PC-9 (cell line): ENCODE measurements at regions of chr19 and their contacts with region 1.

Region 1: GRCh38 chr19:10000171-10000826 is 10.0 kb downstream of the COL5A3 start:
- DNase-seq: peak; percentile 60 to 64
- H3K4me3 ChIP-seq: no peak overlapping the region
- H3K27ac ChIP-seq: no peak overlapping the region
- H3K4me1 ChIP-seq: no peaks in the 10 kb centered on the region
- H3K27me3 ChIP-seq: peaks cover 77% of the 10 kb centered on the region
- CTCF ChIP-seq: peak; percentile 92

Region 2: GRCh38 chr19:9858766-9859165 is 141.5 kb before region 1 on chr19:
- CTCF ChIA-PET with region 1: interaction called, 12 read pairs
- POLR2A ChIA-PET with region 1: no interaction called
- intact Hi-C with region 1: no loop called
- DNase-seq: no peak
- H3K4me3 ChIP-seq: no peak overlapping the region
- H3K27ac ChIP-seq: no peak overlapping the region
- H3K4me1 ChIP-seq: no peaks in the 10 kb centered on the region
- H3K27me3 ChIP-seq: peaks cover 12% of the 10 kb centered on the region; the same call in 1 of the 2 replicates
- CTCF ChIP-seq: no peak

Region 3: GRCh38 chr19:9945319-9945966 is 54.9 kb before region 1 on chr19:
- CTCF ChIA-PET with region 1: no interaction called
- POLR2A ChIA-PET with region 1: no interaction called
- intact Hi-C with region 1: no loop called
- DNase-seq: no peak
- H3K4me3 ChIP-seq: no peak overlapping the region
- H3K27ac ChIP-seq: no peak overlapping the region
- H3K4me1 ChIP-seq: no peaks in the 10 kb centered on the region
- H3K27me3 ChIP-seq: peaks cover 29% of the 10 kb centered on the region; the same call in 1 of the 2 replicates
- CTCF ChIP-seq: no peak

Region 4: DNA sequence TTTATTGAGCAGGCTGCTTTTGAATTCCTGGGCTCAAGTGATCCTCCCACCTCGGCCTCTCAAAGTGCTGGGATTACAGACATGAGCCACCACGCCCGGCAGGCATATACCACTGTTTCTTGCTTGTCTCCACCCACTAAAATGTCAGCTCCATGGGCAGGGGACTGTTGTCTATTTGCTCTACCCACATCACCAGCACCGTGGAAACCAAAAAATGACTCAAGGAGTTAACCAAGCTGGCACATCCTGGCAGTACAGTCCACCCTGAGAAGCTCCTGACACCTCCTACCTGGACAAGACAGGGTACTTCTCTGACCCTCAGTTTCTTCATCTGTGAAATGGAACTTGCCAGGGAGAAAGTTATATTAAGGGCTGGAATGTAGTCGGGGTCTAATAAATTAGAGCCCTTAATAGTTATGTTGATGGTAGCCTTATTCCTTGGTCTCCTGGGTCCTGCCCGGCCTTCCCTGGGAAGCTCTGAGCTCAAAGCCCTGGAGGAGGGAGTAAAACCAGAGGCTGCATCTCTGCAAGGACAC is 26.9 kb after region 1 on chr19:
- CTCF ChIA-PET with region 1: interaction called, 10 read pairs
- POLR2A ChIA-PET with region 1: no interaction called
- intact Hi-C with region 1: no loop called
- DNase-seq: peak in 1 of 2 experiments; percentile 43
- H3K4me3 ChIP-seq: no peak overlapping the region
- H3K27ac ChIP-seq: no peak overlapping the region
- H3K4me1 ChIP-seq: peaks cover 3% of the 10 kb centered on the region; the same call in 1 of the 2 replicates
- H3K27me3 ChIP-seq: peaks cover 88% of the 10 kb centered on the region
- CTCF ChIP-seq: no peak

Region 5: GRCh38 chr19:10194500-10195289 is 194.4 kb after region 1 on chr19 and contains the start of gene DNMT1:
- CTCF ChIA-PET with region 1: interaction called, 11 read pairs
- POLR2A ChIA-PET with region 1: no interaction called
- intact Hi-C with region 1: no loop called
- DNase-seq: peak; percentile 88 to 97
- H3K4me3 ChIP-seq: peak within 1 kb of the TSS; percentile 87
- H3K27ac ChIP-seq: peak within 1 kb of the TSS; percentile 2; the same call in 1 of the 2 replicates
- H3K4me1 ChIP-seq: peaks cover 18% of the 10 kb centered on the region
- H3K27me3 ChIP-seq: no peaks in the 10 kb centered on the region
- CTCF ChIP-seq: no peak
- total RNA-seq, gene DNMT1: 111 and 117 TPM in 2 replicates

Region 6: GRCh38 chr19:10380313-10381102 is 380.2 kb after region 1 on chr19 and contains the start of gene TYK2:
- CTCF ChIA-PET with region 1: interaction called, 11 read pairs
- POLR2A ChIA-PET with region 1: no interaction called
- intact Hi-C with region 1: no loop called
- DNase-seq: peak; percentile 97
- H3K4me3 ChIP-seq: peak within 1 kb of the TSS; percentile 82
- H3K27ac ChIP-seq: no peak within 1 kb of the TSS
- H3K4me1 ChIP-seq: peaks cover 6% of the 10 kb centered on the region
- H3K27me3 ChIP-seq: no peaks in the 10 kb centered on the region
- CTCF ChIP-seq: no peak
- total RNA-seq, gene TYK2: 94.7 and 102 TPM in 2 replicates